ENCODE measurements at regions of chr3 and their contacts with region 1.

Region 1: GRCh38 chr3:66661634-66662033 is 160.8 kb upstream of the LRIG1 start:
- DNase-seq: no peak
- H3K4me3 ChIP-seq: no peak overlapping the region
- CTCF ChIP-seq: no peak

Region 2: DNA sequence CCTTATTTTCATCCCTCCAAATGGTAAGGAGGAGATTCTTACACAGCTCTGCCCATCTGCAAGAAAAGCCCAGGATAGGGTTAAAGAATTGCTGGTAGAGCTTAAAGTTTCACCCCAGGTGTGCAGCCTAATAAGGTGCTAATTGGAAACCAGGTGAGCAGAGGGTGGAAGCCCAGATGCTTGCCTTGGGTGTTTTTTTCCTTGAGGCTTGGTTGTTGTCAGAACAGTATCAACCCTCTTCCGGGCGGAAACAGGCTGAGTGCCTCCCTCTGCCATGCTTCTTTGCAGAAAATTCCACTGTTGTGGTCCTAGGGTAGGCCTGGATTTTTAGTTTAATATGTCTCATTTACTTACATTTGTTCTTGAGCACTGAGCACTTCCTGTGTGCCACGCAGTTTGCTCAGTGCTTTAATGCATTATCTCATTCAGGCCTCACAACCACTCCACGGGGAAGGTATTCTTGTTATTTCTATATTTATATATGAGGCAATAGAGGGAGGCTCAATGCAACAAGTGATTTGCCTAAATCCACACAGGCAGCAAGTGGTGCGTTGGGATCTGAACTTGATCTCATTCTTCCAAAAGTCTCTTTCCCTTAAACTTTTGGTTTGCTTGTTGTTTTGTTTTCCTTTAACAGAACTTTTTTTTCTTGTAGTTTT is 45.9 kb before region 1 on chr3:
- in situ Hi-C with region 1: loop called (anchors 5 kb)
- DNase-seq: no peak
- H3K4me3 ChIP-seq: no peak overlapping the region
- CTCF ChIP-seq: no peak